ENCODE measurements at regions of chr3 and their contacts with region 1.

Region 1: DNA sequence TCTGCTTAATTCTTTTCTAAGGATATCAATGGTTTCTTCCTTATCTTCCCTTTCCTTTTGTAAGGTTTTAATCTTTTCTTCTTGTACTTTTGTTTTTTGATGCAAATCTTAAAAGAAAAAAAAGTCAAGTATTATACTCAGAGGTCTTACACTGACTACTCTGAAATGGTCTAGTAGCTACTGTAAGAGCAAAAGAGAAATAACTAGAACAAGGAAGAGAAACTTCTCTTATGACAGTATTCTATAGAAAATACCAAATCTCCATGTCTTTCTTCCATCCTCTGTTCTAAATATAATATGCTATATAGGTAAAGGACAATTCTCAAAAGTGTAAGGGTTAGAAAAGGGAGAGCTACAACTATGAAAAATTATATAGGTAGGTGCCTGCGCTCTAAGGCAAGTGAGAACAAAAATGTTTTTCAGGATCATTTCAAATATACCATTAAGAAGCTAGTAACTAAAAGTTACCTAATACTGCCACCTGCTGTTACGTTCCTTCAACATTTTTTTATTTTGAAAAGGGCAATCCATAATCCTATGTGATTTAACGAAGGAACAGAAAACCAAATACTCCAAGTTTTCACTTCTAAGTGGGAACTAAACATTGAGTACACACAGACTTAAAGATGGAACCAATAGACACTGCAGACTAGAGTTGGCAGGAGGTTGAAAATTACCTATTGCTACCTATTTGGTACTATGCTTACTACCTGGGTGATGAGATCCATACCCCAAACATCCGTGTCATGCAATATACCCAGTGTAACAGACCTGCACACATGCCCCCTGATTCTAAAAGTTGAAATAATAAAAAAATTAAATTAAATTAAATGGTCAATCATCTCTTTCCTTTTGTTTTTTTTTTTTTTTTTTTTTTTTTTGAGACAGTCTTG is 36.7 kb downstream of the CIP2A start:
- DNase-seq: peak; percentile 4
- H3K4me3 ChIP-seq: no peak overlapping the region
- H3K27ac ChIP-seq: no peak overlapping the region
- H3K27me3 ChIP-seq: no peaks in the 10 kb centered on the region
- CTCF ChIP-seq: peak; percentile 53

Region 2: DNA sequence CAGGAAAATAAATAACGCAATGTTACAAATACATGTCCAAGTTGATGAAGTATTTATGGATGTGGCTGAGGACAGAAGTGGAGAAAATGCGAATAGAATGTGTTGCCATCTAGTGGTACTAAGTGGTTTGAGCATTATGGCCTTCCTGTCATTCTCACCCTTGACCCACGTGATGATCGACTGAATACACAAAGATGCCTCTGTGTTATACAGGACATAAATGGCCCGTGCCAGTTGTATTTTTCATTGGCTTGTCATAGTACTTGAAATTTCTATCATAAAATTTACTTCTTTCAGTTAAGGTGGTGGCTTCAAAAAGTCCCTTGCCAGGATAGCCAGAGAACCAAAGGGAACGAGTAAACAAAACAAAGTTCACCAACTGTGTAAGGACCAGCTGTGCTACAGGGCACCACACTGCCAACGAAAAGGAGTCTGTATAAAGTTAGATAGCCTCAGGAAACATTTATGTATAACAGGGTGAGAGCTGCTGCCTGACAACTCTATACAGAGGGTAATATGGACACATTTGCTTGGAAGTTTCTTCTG is 145.8 kb before region 1 on chr3:
- CTCF ChIA-PET with region 1: no interaction called
- POLR2A ChIA-PET with region 1: no interaction called
- DNase-seq: peak; percentile 16
- H3K4me3 ChIP-seq: no peak overlapping the region
- H3K27ac ChIP-seq: no peak overlapping the region
- H3K27me3 ChIP-seq: no peaks in the 10 kb centered on the region
- CTCF ChIP-seq: peak; percentile 80

Region 3: DNA sequence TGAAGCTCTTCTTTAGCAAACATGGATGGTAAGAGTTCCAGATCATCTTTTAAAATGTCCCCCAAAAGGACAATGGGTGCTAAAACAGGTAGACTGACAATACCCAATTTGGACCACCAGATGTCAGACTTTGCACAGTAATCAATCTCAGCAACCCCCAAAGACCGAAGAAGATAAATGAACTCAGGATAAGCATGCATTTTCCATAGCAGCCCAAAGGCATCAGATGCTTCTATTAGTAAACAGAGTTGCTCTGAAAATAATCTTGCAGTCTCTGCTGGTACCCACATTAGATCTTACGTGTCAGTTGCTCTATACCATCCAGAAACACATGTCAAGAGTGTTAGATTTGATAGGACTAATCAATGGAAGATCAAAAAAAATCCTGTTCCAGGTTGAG is 62.7 kb before region 1 on chr3:
- CTCF ChIA-PET with region 1: interaction called, 193 read pairs
- POLR2A ChIA-PET with region 1: no interaction called
- DNase-seq: no peak
- H3K4me3 ChIP-seq: no peak overlapping the region
- H3K27ac ChIP-seq: no peak overlapping the region
- H3K27me3 ChIP-seq: no peaks in the 10 kb centered on the region
- CTCF ChIP-seq: peak; percentile 74

Region 4: DNA sequence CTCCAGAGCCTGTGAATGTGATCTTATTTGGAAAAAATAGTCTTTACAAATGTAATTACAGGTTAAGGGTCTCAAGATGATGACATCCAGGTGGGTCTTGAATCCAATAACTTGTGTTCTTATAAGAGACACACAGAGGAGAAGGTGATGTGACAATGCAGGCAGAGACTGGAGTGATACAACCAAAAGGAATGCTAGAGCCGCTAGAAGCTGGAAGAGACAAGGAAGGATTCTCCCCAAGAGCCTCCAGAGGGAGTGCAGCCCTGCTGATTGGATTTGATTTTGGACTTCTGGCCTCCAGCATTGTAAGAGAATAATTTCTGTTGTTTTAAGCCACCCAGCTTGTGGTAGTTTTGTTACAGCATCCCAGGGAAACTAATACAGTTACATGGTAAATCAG is 51.8 kb before region 1 on chr3:
- CTCF ChIA-PET with region 1: interaction called, 16 read pairs
- POLR2A ChIA-PET with region 1: no interaction called
- DNase-seq: no peak
- H3K4me3 ChIP-seq: no peak overlapping the region
- H3K27ac ChIP-seq: no peak overlapping the region
- H3K27me3 ChIP-seq: no peaks in the 10 kb centered on the region
- CTCF ChIP-seq: no peak

Region 5: DNA sequence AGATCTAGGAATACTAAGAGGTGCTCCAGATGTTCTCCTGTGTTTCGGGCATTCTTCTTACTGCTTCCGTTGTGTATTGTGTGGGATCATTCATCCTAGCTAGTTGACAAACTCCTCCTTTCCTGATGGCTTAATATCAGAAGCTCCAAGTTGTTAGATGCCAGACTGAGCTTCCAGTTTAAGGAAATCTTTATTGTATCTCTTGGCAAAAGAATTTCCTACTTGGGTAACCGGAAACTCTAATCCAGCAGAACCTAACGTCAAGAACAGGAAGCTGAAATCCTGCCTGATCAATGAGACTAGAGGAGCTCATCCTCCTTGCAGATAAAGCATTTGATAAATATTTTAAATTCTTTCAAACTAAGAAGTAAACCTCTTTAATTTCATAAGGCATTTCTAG is 14.4 kb before region 1 on chr3:
- CTCF ChIA-PET with region 1: interaction called, 16 read pairs
- POLR2A ChIA-PET with region 1: no interaction called
- DNase-seq: no peak
- H3K4me3 ChIP-seq: no peak overlapping the region
- H3K27ac ChIP-seq: no peak overlapping the region
- H3K27me3 ChIP-seq: no peaks in the 10 kb centered on the region
- CTCF ChIP-seq: no peak

Measured in AG04450 (cell line).